CD4-positive, alpha-beta memory T cell (primary cell): ENCODE measurements at regions of chr4 and their contacts with region 1.

Region 1: GRCh38 chr4:140359562-140360427 is 13.7 kb upstream of the SCOC start:
- DNase-seq: peak; percentile 65 to 77 (median 70)
- H3K4me3 ChIP-seq: no peak overlapping the region
- H3K4me3 Mint-ChIP-seq: no peak overlapping the region
- H3K27ac ChIP-seq: no peak overlapping the region
- H3K27ac Mint-ChIP-seq: no peak overlapping the region
- H3K4me1 ChIP-seq: no peaks in the 10 kb centered on the region
- H3K4me1 Mint-ChIP-seq: peaks cover 0 to 4% (median 4%) of the 10 kb centered on the region in 4 donors
- H3K27me3 ChIP-seq: no peaks in the 10 kb centered on the region
- H3K27me3 Mint-ChIP-seq: peaks cover 2 to 7% of the 10 kb centered on the region in 2 donors

Region 2: GRCh38 chr4:139734875-139735380 is 624.9 kb before region 1 on chr4:
- CTCF ChIA-PET with region 1: interaction called, 3 read pairs
- POLR2A ChIA-PET with region 1: no interaction called
- intact Hi-C with region 1: loop called (anchors 10 kb)
- DNase-seq: peak; percentile 19 to 39 (median 25)
- H3K4me3 ChIP-seq: no peak overlapping the region
- H3K4me3 Mint-ChIP-seq: peak overlapping the region; percentile 60 to 84 (median 68)
- H3K27ac ChIP-seq: no peak overlapping the region
- H3K27ac Mint-ChIP-seq: peak overlapping the region in 1 of 7 donors; percentile 19
- H3K4me1 ChIP-seq: peaks cover 14% of the 10 kb centered on the region
- H3K4me1 Mint-ChIP-seq: peaks cover 0 to 11% (median 8%) of the 10 kb centered on the region in 4 donors
- H3K27me3 ChIP-seq: peaks cover 4% of the 10 kb centered on the region
- H3K27me3 Mint-ChIP-seq: peaks cover 38 to 45% of the 10 kb centered on the region in 2 donors

Region 3: DNA sequence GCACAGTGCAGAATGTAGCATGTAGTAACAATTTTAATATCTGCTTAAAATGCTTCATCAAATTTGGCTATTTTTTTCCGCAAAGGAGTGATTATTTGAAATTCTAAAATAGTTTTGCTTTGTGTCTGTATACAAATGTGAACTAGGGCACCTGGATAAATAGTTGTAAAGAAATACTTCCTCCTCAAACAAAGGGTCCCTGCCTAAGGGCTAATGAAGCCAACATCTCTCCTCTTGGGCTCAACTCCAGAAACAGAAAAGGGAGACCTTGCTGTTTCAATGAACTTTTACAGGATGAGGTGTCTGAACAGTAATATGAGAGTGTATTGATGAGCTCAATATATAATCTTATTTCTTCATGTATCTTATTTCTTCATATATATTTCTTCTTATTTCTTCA is 17.2 kb before region 1 on chr4:
- CTCF ChIA-PET with region 1: interaction called, 14 read pairs
- POLR2A ChIA-PET with region 1: no interaction called
- intact Hi-C with region 1: no loop called
- DNase-seq: no peak
- H3K4me3 ChIP-seq: no peak overlapping the region
- H3K4me3 Mint-ChIP-seq: no peak overlapping the region
- H3K27ac ChIP-seq: no peak overlapping the region
- H3K27ac Mint-ChIP-seq: no peak overlapping the region
- H3K4me1 ChIP-seq: no peaks in the 10 kb centered on the region
- H3K4me1 Mint-ChIP-seq: peaks cover 0 to 4% (median 4%) of the 10 kb centered on the region in 4 donors
- H3K27me3 ChIP-seq: peaks cover 5% of the 10 kb centered on the region
- H3K27me3 Mint-ChIP-seq: peaks cover 10 to 15% of the 10 kb centered on the region in 2 donors

Region 4: GRCh38 chr4:140382732-140383131 is 22.9 kb after region 1 on chr4:
- CTCF ChIA-PET with region 1: interaction called, 13 read pairs
- POLR2A ChIA-PET with region 1: no interaction called
- intact Hi-C with region 1: no loop called
- DNase-seq: no peak
- H3K4me3 ChIP-seq: no peak overlapping the region
- H3K4me3 Mint-ChIP-seq: no peak overlapping the region
- H3K27ac ChIP-seq: no peak overlapping the region
- H3K27ac Mint-ChIP-seq: no peak overlapping the region
- H3K4me1 ChIP-seq: no peaks in the 10 kb centered on the region
- H3K4me1 Mint-ChIP-seq: peaks cover 0 to 7% (median 2%) of the 10 kb centered on the region in 4 donors
- H3K27me3 ChIP-seq: no peaks in the 10 kb centered on the region
- H3K27me3 Mint-ChIP-seq: peaks cover 0 to 4% of the 10 kb centered on the region in 2 donors

Region 5: GRCh38 chr4:140523857-140524742 is 164.3 kb after region 1 on chr4 and contains the start of gene ELMOD2:
- CTCF ChIA-PET with region 1: interaction called, 11 read pairs
- POLR2A ChIA-PET with region 1: no interaction called
- intact Hi-C with region 1: no loop called
- DNase-seq: peak; percentile 96 to 97 (median 97)
- H3K4me3 ChIP-seq: peak within 1 kb of the TSS; percentile 37 to 90
- H3K4me3 Mint-ChIP-seq: peak within 1 kb of the TSS; percentile 81 to 95 (median 85)
- H3K27ac ChIP-seq: peak within 1 kb of the TSS; percentile 67
- H3K27ac Mint-ChIP-seq: peak within 1 kb of the TSS; percentile 82 to 93 (median 88)
- H3K4me1 ChIP-seq: peaks cover 20% of the 10 kb centered on the region
- H3K4me1 Mint-ChIP-seq: peaks cover 12 to 26% (median 20%) of the 10 kb centered on the region in 4 donors
- H3K27me3 ChIP-seq: no peaks in the 10 kb centered on the region
- H3K27me3 Mint-ChIP-seq: no peaks in the 10 kb centered on the region
- total RNA-seq, gene ELMOD2: 26.2 to 29.8 TPM

Region 6: GRCh38 chr4:140637836-140638235 is 278.0 kb after region 1 on chr4:
- CTCF ChIA-PET with region 1: no interaction called
- POLR2A ChIA-PET with region 1: no interaction called
- intact Hi-C with region 1: loop called (anchors 1 kb)
- DNase-seq: peak in 4 of 5 donors; percentile 3 to 33 (median 14)
- H3K4me3 ChIP-seq: no peak overlapping the region
- H3K4me3 Mint-ChIP-seq: no peak overlapping the region
- H3K27ac ChIP-seq: no peak overlapping the region
- H3K27ac Mint-ChIP-seq: no peak overlapping the region
- H3K4me1 ChIP-seq: no peaks in the 10 kb centered on the region
- H3K4me1 Mint-ChIP-seq: no peaks in the 10 kb centered on the region
- H3K27me3 ChIP-seq: no peaks in the 10 kb centered on the region
- H3K27me3 Mint-ChIP-seq: peaks cover 0 to 32% of the 10 kb centered on the region in 2 donors